ENCODE measurements at regions of chr17 and their contacts with region 1.

Region 1: GRCh38 chr17:82022981-82023374 is at the start of gene LRRC45:
- DNase-seq: peak; percentile 100
- ATAC-seq: peak; percentile 97
- H3K4me3 Mint-ChIP-seq: peak within 1 kb of the TSS; percentile 84
- H3K27ac Mint-ChIP-seq: peak within 1 kb of the TSS; percentile 76
- H3K4me1 Mint-ChIP-seq: peaks cover 14% of the 10 kb centered on the region
- H3K27me3 Mint-ChIP-seq: no peaks in the 10 kb centered on the region
- total RNA-seq, gene LRRC45: 17.6 to 20.6 TPM

Region 2: GRCh38 chr17:81683584-81684237 is 339.3 kb before region 1 on chr17 and contains the starts of genes ARL16 and HGS:
- CTCF ChIA-PET with region 1: no interaction called
- POLR2A ChIA-PET with region 1: no interaction called
- intact Hi-C with region 1: loop called in 1 of 2 experiments (anchors 2 kb)
- DNase-seq: peak; percentile 98
- ATAC-seq: peak; percentile 98
- H3K4me3 Mint-ChIP-seq: peak within 1 kb of the TSS; percentile 87
- H3K27ac Mint-ChIP-seq: peak within 1 kb of the TSS; percentile 83
- H3K4me1 Mint-ChIP-seq: peaks cover 30% of the 10 kb centered on the region
- H3K27me3 Mint-ChIP-seq: no peaks in the 10 kb centered on the region
- total RNA-seq, gene ARL16: 39.0 to 39.1 TPM
- total RNA-seq, gene HGS: 100 to 102 TPM

Region 3: DNA sequence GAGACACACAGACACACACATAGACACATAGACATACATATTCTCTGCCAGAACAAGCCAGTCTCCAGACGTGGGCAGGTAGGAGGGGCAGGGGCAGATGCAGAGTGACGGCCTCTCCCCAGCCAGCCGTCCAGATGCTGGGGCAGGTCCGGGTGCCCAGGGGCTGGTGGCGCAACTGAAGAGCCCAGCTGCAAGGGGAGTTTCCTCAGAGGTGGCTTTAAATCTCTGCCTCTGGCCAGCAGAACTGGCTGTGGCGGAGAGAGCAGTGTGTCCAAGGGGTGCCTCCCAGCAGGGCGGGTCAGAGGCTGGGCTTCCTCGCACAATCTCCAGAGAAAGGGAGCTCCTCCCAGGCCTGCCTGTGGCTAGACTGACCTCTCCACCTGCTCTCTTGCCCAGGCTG is 228.5 kb before region 1 on chr17:
- CTCF ChIA-PET with region 1: no interaction called
- POLR2A ChIA-PET with region 1: no interaction called
- intact Hi-C with region 1: no loop called
- DNase-seq: no peak
- ATAC-seq: no peak
- H3K4me3 Mint-ChIP-seq: no peak overlapping the region
- H3K27ac Mint-ChIP-seq: no peak overlapping the region
- H3K4me1 Mint-ChIP-seq: no peaks in the 10 kb centered on the region
- H3K27me3 Mint-ChIP-seq: no peaks in the 10 kb centered on the region

Region 4: DNA sequence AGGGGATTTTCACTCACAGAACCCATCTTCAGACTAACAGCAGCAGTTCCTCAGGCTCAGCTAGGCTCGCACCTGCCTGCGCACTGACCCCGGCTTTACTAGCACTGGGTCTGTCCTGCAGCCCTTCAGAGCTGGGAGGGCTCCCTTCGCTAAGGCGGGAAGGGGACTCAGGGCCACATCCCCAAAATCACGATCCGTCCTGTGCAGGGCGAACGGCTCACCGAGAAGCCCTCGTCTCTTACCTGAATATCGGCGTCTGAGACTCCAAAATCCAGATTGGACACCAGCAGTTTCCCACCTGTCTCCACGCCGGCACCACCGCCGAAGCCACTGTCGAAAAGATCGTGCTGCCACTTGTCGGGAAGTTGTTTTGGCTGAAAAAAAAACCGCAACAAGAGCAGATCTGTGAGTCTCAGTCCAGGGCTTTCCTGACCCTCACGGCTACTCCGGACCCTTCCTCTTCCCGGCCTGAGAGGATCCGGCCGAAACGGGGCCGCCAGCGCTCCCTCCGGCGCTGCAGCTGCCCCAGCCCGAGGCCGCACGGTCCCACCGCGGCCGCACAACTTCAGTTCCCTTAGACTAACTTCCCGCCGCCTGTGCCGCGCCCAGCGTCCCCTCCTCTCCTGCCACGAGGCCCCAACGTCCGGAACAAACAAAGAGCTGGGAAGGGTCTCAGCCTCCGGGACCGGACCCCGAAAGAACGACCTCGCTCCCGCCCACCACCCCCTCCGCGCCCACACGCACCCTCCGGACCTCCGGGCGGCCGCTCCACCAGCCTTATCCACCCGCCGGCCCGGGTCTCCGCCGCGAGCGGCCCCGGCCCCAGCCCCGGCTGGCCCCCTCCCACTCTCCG is 132.3 kb before region 1 on chr17:
- CTCF ChIA-PET with region 1: no interaction called
- POLR2A ChIA-PET with region 1: interaction called, 3 read pairs
- intact Hi-C with region 1: loop called in 1 of 2 experiments (anchors 1 kb)
- DNase-seq: peak; percentile 51
- ATAC-seq: no peak
- H3K4me3 Mint-ChIP-seq: peak overlapping the region; percentile 85
- H3K27ac Mint-ChIP-seq: peak overlapping the region; percentile 93
- H3K4me1 Mint-ChIP-seq: peaks cover 32% of the 10 kb centered on the region
- H3K27me3 Mint-ChIP-seq: no peaks in the 10 kb centered on the region

Region 5: GRCh38 chr17:81941790-81942553 is 81.0 kb before region 1 on chr17:
- CTCF ChIA-PET with region 1: no interaction called
- POLR2A ChIA-PET with region 1: interaction called, 3 read pairs
- intact Hi-C with region 1: loop called in 1 of 2 experiments (anchors 1 kb)
- DNase-seq: no peak
- ATAC-seq: no peak
- H3K4me3 Mint-ChIP-seq: no peak overlapping the region
- H3K27ac Mint-ChIP-seq: no peak overlapping the region
- H3K4me1 Mint-ChIP-seq: peaks cover 5% of the 10 kb centered on the region
- H3K27me3 Mint-ChIP-seq: peaks cover 5% of the 10 kb centered on the region

Region 6: DNA sequence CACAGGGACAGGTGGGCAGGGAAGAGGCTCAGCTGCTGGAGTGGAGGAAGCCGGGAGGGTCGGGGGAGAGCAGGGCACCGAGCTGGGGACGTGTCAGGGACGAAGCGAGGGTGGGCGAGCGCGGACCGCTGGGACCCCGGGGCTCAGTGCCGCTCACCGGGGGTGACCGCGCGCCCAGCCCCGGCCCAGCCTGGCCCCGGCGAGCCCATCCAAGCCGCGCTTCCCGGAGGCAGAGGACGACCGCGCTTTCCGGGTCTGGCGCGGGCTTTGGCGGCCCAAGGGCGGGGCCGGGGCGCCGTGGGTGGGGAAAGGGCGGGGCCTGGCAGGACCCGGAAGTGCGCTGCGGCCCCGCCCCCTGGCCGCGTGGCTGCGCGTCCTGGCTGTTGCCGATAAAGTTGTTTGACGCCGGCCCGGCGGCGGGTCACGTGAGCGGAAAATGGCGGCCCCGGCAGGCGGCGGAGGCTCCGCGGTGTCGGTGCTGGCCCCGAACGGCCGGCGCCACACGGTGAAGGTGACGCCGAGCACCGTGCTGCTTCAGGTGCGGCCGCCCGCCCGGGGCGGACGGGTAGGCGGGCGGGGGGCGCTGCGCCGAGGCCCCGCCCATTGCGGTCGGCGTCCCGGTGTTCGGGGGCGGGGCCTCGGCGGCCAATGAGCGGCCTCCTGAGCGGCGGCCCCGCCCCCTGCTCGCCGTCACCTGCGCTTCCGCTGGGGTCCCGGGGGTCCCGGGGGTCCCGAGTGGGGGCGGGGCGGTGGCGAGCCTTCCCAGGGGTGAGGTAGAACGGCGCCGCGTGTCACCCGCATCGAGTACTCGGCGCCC is 45.6 kb before region 1 on chr17 and contains the start of gene ASPSCR1:
- CTCF ChIA-PET with region 1: no interaction called
- POLR2A ChIA-PET with region 1: no interaction called
- intact Hi-C with region 1: loop called in 1 of 2 experiments (anchors 1 kb)
- DNase-seq: peak; percentile 95
- ATAC-seq: peak; percentile 83
- H3K4me3 Mint-ChIP-seq: peak within 1 kb of the TSS; percentile 94
- H3K27ac Mint-ChIP-seq: peak within 1 kb of the TSS; percentile 98
- H3K4me1 Mint-ChIP-seq: peaks cover 32% of the 10 kb centered on the region
- H3K27me3 Mint-ChIP-seq: no peaks in the 10 kb centered on the region
- total RNA-seq, gene ASPSCR1: 23.3 to 26.5 TPM

Region 7: GRCh38 chr17:82065638-82066303 is 42.8 kb after region 1 on chr17 and contains the start of gene DUS1L:
- CTCF ChIA-PET with region 1: no interaction called
- POLR2A ChIA-PET with region 1: no interaction called
- intact Hi-C with region 1: loop called in 1 of 2 experiments (anchors 1 kb)
- DNase-seq: peak; percentile 83
- ATAC-seq: peak; percentile 93
- H3K4me3 Mint-ChIP-seq: peak within 1 kb of the TSS; percentile 84
- H3K27ac Mint-ChIP-seq: peak within 1 kb of the TSS; percentile 91
- H3K4me1 Mint-ChIP-seq: peaks cover 14% of the 10 kb centered on the region
- H3K27me3 Mint-ChIP-seq: no peaks in the 10 kb centered on the region
- total RNA-seq, gene DUS1L: 119 to 124 TPM

Region 8: GRCh38 chr17:82457997-82458864 is 435.3 kb after region 1 on chr17 and contains the start of gene NARF:
- CTCF ChIA-PET with region 1: no interaction called
- POLR2A ChIA-PET with region 1: no interaction called
- intact Hi-C with region 1: loop called in 1 of 2 experiments (anchors 2 kb)
- DNase-seq: peak; percentile 98
- ATAC-seq: peak; percentile 99
- H3K4me3 Mint-ChIP-seq: peak within 1 kb of the TSS; percentile 79
- H3K27ac Mint-ChIP-seq: peak within 1 kb of the TSS; percentile 99
- H3K4me1 Mint-ChIP-seq: peaks cover 28% of the 10 kb centered on the region
- H3K27me3 Mint-ChIP-seq: no peaks in the 10 kb centered on the region
- total RNA-seq, gene NARF: 65.4 to 85.9 TPM